AG04449 (cell line): ENCODE measurements at regions of chr17 and their contacts with region 1.

Region 1: GRCh38 chr17:71460943-71461342 is 659.9 kb upstream of the SOX9 start:
- DNase-seq: no peak
- H3K4me3 ChIP-seq: no peak overlapping the region
- CTCF ChIP-seq: peak; percentile 43

Region 2: GRCh38 chr17:70767102-70767701 is 693.7 kb before region 1 on chr17:
- CTCF ChIA-PET with region 1: interaction called, 26 read pairs
- POLR2A ChIA-PET with region 1: no interaction called
- DNase-seq: no peak
- H3K4me3 ChIP-seq: no peak overlapping the region
- CTCF ChIP-seq: peak; percentile 36

Region 3: DNA sequence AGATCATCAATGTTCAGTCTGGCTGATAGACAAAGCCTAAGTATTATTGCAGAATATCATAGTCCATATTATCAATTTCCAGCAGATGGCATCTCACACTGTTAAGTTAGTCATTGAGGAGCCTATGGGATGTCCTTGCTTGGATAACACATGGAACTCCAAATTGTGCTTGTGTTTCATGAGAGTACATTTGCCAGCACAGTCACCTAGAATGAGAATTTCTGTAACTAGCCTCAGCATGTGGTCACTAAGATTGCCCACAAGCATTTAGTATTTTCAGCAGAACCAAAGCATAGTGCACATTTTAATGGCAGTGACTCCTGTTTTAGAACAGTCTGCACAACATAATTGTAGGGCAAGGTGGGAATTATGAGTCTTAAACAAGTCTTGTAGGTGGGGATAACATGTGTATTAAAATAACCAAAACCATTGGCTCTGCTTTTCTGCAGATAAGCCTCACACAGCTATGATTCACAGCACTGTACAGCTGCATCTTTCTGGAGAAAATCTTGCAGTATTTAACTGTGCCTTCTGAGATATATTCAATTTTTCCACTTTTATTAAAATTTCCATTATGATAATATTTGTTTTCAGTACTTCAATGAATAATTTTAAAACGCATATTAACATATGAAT is 222.9 kb before region 1 on chr17:
- CTCF ChIA-PET with region 1: interaction called, 39 read pairs
- POLR2A ChIA-PET with region 1: no interaction called
- DNase-seq: peak; percentile 19
- H3K4me3 ChIP-seq: no peak overlapping the region
- CTCF ChIP-seq: peak; percentile 32

Region 4: GRCh38 chr17:71409712-71410111 is 51.2 kb before region 1 on chr17:
- CTCF ChIA-PET with region 1: no interaction called
- POLR2A ChIA-PET with region 1: no interaction called
- DNase-seq: peak; percentile 75
- H3K4me3 ChIP-seq: no peak overlapping the region
- CTCF ChIP-seq: no peak

Region 5: DNA sequence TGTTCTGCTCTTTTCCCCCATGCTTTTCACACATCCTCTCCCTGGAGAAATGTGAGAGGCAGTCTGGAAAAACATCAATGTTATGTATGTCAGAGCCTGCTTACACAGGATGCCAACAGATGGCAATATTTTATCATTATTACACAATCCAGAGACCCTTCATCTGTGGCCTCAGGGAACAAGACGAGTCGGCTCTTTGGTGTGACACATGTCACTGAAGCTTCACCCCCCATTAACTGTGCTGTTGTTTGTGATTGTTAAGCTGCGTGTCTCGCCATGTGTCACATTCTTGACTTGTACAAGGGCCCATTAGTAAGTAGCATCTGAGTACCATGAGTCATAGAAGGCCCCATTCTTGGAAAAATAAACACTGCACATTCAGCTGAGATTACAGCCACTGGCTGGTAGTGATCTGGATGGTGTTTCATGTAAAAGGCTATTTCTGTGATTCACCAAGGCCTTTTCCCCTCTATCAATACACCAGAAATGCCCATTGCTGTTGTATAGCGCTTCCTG is 22.3 kb before region 1 on chr17:
- CTCF ChIA-PET with region 1: interaction called, 21 read pairs
- POLR2A ChIA-PET with region 1: no interaction called
- DNase-seq: peak; percentile 90
- H3K4me3 ChIP-seq: no peak overlapping the region
- CTCF ChIP-seq: no peak

Region 6: DNA sequence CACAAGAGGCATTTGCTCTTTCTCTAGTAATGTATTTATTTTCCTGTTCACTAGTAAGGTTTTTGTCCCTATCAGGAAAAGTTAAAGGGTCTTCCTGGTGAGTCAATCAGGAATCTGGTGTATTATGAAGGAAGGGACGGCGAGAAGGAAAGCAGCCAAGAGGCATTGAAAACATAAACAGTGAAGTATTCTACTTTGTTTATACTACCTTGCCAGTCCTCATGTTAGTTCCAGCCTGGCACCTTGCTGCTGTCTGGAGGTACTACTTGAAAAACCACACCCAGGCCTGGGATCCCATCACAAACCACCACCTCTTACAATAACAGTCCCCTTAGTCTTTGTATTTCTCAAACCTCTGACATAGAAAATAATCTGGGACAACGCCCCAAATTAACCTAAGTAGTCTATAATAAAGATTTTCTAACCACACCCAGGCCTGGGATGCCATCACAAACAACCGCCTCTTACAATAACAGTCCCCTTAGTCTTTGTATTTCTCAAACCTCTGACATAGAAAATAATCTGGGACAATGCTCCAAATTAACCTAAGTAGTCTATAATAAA is 16.9 kb before region 1 on chr17:
- CTCF ChIA-PET with region 1: interaction called, 21 read pairs
- POLR2A ChIA-PET with region 1: no interaction called
- DNase-seq: no peak
- H3K4me3 ChIP-seq: no peak overlapping the region
- CTCF ChIP-seq: no peak

Region 7: DNA sequence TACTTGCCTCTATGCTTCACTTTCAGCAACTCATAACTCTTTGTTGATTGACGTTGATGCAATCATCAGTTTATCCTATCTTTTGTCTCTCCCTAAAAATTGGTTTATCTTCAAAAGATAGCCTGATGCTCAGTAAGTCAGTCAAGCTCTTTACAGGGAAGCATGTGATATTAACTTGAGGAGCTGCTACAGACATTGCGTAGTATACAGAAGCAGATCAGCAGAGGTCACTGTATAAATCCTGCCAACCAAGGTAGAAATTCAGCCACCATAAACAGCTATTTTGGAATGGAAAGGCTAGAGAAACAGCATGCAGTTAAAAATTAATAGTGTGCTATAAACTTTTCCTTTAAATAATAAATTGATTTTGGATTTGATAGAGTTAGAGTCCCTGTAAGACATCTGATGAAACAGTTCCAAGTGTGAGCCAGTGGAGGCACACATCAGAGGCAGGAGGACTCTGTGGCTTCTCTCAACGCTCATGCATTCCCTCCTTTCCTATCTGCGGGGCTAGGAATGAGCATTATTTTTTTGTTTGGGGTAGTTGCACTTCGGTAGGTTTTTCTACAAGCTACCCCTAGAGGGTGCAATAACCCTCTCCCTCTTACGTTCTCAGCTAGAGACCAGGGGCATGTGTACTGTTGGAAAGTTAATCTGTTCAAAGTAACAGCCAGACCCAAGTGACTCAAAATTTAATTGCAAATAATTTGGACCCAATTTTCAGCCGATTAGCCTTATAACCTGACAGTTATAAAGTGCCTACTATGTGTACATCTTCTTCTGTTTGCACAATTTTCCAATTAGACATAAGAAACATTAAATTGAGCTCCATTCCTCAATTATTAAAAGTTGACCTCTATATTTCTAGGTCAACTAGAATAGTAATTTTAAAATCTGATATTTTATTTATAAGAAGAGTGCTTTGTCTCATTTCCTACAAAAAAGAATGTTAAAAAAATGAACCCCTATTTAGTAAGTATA is 12.2 kb after region 1 on chr17:
- CTCF ChIA-PET with region 1: interaction called, 56 read pairs
- POLR2A ChIA-PET with region 1: no interaction called
- DNase-seq: no peak
- H3K4me3 ChIP-seq: no peak overlapping the region
- CTCF ChIP-seq: peak; percentile 63